ENCODE measurements at regions of chr1 and their contacts with region 1.

Region 1: GRCh38 chr1:39332291-39332690 is 127.8 kb downstream of the MACF1 start:
- DNase-seq: no peak
- ATAC-seq: no peak
- H3K4me3 ChIP-seq: no peak overlapping the region
- H3K27ac ChIP-seq: no peak overlapping the region
- H3K4me1 ChIP-seq: no peaks in the 10 kb centered on the region
- H3K27me3 ChIP-seq: no peaks in the 10 kb centered on the region

Region 2: DNA sequence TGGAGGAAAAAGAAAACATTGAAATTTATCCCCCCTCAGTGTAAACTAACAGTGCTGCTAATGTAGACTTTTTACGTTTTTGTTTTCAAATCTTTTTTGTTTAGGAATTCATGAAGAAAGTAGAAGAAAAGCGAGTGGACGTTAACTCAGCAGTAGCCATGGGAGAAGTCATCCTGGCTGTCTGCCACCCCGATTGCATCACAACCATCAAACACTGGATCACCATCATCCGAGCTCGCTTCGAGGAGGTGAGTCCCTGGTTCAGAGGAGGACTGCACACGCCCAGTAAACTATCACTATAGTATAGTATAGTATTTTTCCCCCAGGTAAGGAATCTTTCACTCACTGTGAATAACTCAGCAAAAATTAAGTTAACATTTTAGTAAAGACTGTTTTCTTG is 121.3 kb after region 1 on chr1:
- intact Hi-C with region 1: loop called in 1 of 4 experiments (anchors 10 kb)
- DNase-seq: peak; percentile 67 to 87 (median 79)
- ATAC-seq: peak; percentile 33 to 53
- H3K4me3 ChIP-seq: no peak overlapping the region
- H3K27ac ChIP-seq: no peak overlapping the region
- H3K4me1 ChIP-seq: no peaks in the 10 kb centered on the region
- H3K27me3 ChIP-seq: no peaks in the 10 kb centered on the region